Body of pancreas (tissue), 4 donors: ENCODE measurements at regions of chr11 and their contacts with region 1.

Region 1: GRCh38 chr11:95050595-95051202 is 1.5 kb downstream of the KDM4F start:
- DNase-seq: no peak
- ATAC-seq: no peak
- H3K4me3 ChIP-seq: no peak overlapping the region
- H3K27ac ChIP-seq: no peak overlapping the region
- H3K4me1 ChIP-seq: no peaks in the 10 kb centered on the region
- H3K27me3 ChIP-seq: no peaks in the 10 kb centered on the region
- CTCF ChIP-seq: no peak
- POLR2A ChIP-seq: no peak

Region 2: GRCh38 chr11:94826415-94826814 is 224.3 kb before region 1 on chr11:
- intact Hi-C with region 1: no loop called
- DNase-seq: no peak
- ATAC-seq: no peak
- H3K4me3 ChIP-seq: no peak overlapping the region
- H3K27ac ChIP-seq: no peak overlapping the region
- H3K4me1 ChIP-seq: peaks cover 20% of the 10 kb centered on the region
- H3K27me3 ChIP-seq: no peaks in the 10 kb centered on the region
- CTCF ChIP-seq: no peak
- POLR2A ChIP-seq: no peak

Region 3: GRCh38 chr11:94954753-94955152 is 95.9 kb before region 1 on chr11:
- intact Hi-C with region 1: no loop called
- DNase-seq: no peak
- ATAC-seq: no peak
- H3K4me3 ChIP-seq: no peak overlapping the region
- H3K27ac ChIP-seq: no peak overlapping the region
- H3K4me1 ChIP-seq: no peaks in the 10 kb centered on the region
- H3K27me3 ChIP-seq: no peaks in the 10 kb centered on the region
- CTCF ChIP-seq: no peak
- POLR2A ChIP-seq: no peak

Region 4: DNA sequence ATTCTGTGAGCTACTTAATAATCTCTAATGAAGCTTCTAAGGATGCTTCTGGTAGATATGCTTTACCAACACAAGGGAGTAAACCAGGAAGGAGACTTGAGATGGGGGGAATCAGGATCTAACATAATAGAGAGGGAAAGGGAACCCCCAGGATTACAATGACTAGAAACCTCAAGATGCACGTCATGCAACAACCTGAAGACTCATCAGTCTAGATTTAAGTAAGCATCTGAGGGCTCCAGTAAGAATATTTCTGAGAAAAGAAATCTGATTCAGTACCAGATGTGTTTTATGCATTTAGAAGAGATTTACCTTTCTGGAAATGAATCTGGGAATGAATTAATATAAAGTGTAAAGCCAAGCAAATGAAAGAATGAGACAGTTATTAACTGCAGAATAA is 62.0 kb before region 1 on chr11:
- intact Hi-C with region 1: loop called (anchors 5 kb)
- DNase-seq: no peak
- ATAC-seq: no peak
- H3K4me3 ChIP-seq: no peak overlapping the region
- H3K27ac ChIP-seq: no peak overlapping the region
- H3K4me1 ChIP-seq: no peaks in the 10 kb centered on the region
- H3K27me3 ChIP-seq: no peaks in the 10 kb centered on the region
- CTCF ChIP-seq: no peak
- POLR2A ChIP-seq: no peak

Region 5: GRCh38 chr11:95108159-95108611 is 57.5 kb after region 1 on chr11:
- intact Hi-C with region 1: no loop called
- DNase-seq: peak in 2 of 4 donors; percentile 24 to 34
- ATAC-seq: peak; percentile 57
- H3K4me3 ChIP-seq: no peak overlapping the region
- H3K27ac ChIP-seq: peak overlapping the region in 2 of 4 donors; percentile 29 to 58
- H3K4me1 ChIP-seq: no peaks in the 10 kb centered on the region
- H3K27me3 ChIP-seq: no peaks in the 10 kb centered on the region
- CTCF ChIP-seq: no peak
- POLR2A ChIP-seq: no peak